CD8-positive, alpha-beta T cell (primary cell): ENCODE measurements at regions of chr21 and their contacts with region 1.

Region 1: GRCh38 chr21:37452227-37452626 is 85.7 kb downstream of the DYRK1A start:
- DNase-seq: no peak
- ATAC-seq: no peak
- H3K4me3 ChIP-seq: no peak overlapping the region
- H3K4me3 Mint-ChIP-seq: no peak overlapping the region
- H3K27ac ChIP-seq: no peak overlapping the region
- H3K27ac Mint-ChIP-seq: peak overlapping the region; percentile 47
- H3K4me1 ChIP-seq: peaks cover 47% of the 10 kb centered on the region
- H3K4me1 Mint-ChIP-seq: peaks cover 86% of the 10 kb centered on the region
- H3K27me3 ChIP-seq: no peaks in the 10 kb centered on the region
- H3K27me3 Mint-ChIP-seq: no peaks in the 10 kb centered on the region
- CTCF ChIP-seq: no peak

Region 2: GRCh38 chr21:37199057-37199924 is 252.9 kb before region 1 on chr21:
- CTCF ChIA-PET with region 1: no interaction called
- POLR2A ChIA-PET with region 1: no interaction called
- intact Hi-C with region 1: no loop called
- DNase-seq: no peak
- ATAC-seq: no peak
- H3K4me3 ChIP-seq: no peak overlapping the region
- H3K4me3 Mint-ChIP-seq: no peak overlapping the region
- H3K27ac ChIP-seq: no peak overlapping the region
- H3K27ac Mint-ChIP-seq: no peak overlapping the region
- H3K4me1 ChIP-seq: no peaks in the 10 kb centered on the region
- H3K4me1 Mint-ChIP-seq: no peaks in the 10 kb centered on the region
- H3K27me3 ChIP-seq: no peaks in the 10 kb centered on the region
- H3K27me3 Mint-ChIP-seq: no peaks in the 10 kb centered on the region
- CTCF ChIP-seq: no peak

Region 3: GRCh38 chr21:37415939-37416338 is 36.3 kb before region 1 on chr21:
- CTCF ChIA-PET with region 1: interaction called, 3 read pairs
- POLR2A ChIA-PET with region 1: no interaction called
- intact Hi-C with region 1: loop called in 1 of 2 experiments (anchors 5 kb)
- DNase-seq: peak in 1 of 9 experiments; percentile 25
- ATAC-seq: no peak
- H3K4me3 ChIP-seq: no peak overlapping the region
- H3K4me3 Mint-ChIP-seq: no peak overlapping the region
- H3K27ac ChIP-seq: peak overlapping the region in 1 of 2 experiments; percentile 33
- H3K27ac Mint-ChIP-seq: peak overlapping the region; percentile 2
- H3K4me1 ChIP-seq: peaks cover 69% of the 10 kb centered on the region
- H3K4me1 Mint-ChIP-seq: peaks cover 90% of the 10 kb centered on the region
- H3K27me3 ChIP-seq: no peaks in the 10 kb centered on the region
- H3K27me3 Mint-ChIP-seq: no peaks in the 10 kb centered on the region
- CTCF ChIP-seq: no peak

Region 4: GRCh38 chr21:37468909-37469308 is 16.7 kb after region 1 on chr21:
- CTCF ChIA-PET with region 1: interaction called, 6 read pairs
- POLR2A ChIA-PET with region 1: interaction called, 3 read pairs
- intact Hi-C with region 1: loop called in 1 of 2 experiments (anchors 2 kb)
- DNase-seq: no peak
- ATAC-seq: no peak
- H3K4me3 ChIP-seq: no peak overlapping the region
- H3K4me3 Mint-ChIP-seq: no peak overlapping the region
- H3K27ac ChIP-seq: no peak overlapping the region
- H3K27ac Mint-ChIP-seq: no peak overlapping the region
- H3K4me1 ChIP-seq: peaks cover 29% of the 10 kb centered on the region
- H3K4me1 Mint-ChIP-seq: peaks cover 82% of the 10 kb centered on the region
- H3K27me3 ChIP-seq: no peaks in the 10 kb centered on the region
- H3K27me3 Mint-ChIP-seq: no peaks in the 10 kb centered on the region
- CTCF ChIP-seq: no peak